ENCODE measurements at regions of chr5 and their contacts with region 1.

Region 1: GRCh38 chr5:31581498-31582099 is 49.5 kb downstream of the C5orf22 start:
- DNase-seq: no peak
- ATAC-seq: no peak
- H3K4me3 ChIP-seq: no peak overlapping the region
- H3K27ac ChIP-seq: no peak overlapping the region
- H3K4me1 ChIP-seq: no peaks in the 10 kb centered on the region
- H3K27me3 ChIP-seq: no peaks in the 10 kb centered on the region

Region 2: DNA sequence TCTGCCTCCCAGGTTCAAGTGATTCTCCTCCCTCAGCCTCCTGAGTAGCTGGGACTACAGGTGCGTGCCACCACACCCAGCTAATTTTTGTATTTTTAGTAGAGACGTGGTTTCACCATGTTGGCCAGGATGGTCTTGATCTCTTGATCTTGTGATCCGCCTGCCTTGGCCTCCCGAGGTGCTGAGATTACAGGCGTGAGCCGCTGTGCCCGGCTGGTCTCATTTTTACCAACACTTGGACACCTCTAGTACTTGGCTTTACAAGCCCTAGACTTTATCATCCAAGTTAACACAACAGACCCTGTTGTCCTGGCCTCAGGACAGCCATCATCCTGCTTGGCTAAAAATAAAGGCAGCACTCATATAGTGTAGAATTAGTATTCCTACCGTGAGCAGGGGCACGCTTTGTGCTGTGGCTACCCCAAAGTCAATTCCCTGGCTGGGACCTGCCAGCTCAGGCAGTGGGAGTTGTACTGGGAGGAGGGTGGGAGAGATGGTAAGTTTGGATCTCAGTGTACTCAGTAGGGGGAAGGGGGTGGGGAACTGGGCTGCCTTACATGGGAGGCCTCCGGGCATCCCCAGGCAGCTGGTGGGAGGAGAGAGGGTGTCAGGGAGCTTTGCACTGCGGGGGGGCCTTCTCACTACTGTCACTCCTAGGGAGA is 64.0 kb after region 1 on chr5:
- intact Hi-C with region 1: no loop called
- DNase-seq: peak in 2 of 3 donors; percentile 54 to 66
- ATAC-seq: peak; percentile 74 to 87
- H3K4me3 ChIP-seq: no peak overlapping the region
- H3K27ac ChIP-seq: peak overlapping the region; percentile 92
- H3K4me1 ChIP-seq: peaks cover 6% of the 10 kb centered on the region
- H3K27me3 ChIP-seq: no peaks in the 10 kb centered on the region

Region 3: DNA sequence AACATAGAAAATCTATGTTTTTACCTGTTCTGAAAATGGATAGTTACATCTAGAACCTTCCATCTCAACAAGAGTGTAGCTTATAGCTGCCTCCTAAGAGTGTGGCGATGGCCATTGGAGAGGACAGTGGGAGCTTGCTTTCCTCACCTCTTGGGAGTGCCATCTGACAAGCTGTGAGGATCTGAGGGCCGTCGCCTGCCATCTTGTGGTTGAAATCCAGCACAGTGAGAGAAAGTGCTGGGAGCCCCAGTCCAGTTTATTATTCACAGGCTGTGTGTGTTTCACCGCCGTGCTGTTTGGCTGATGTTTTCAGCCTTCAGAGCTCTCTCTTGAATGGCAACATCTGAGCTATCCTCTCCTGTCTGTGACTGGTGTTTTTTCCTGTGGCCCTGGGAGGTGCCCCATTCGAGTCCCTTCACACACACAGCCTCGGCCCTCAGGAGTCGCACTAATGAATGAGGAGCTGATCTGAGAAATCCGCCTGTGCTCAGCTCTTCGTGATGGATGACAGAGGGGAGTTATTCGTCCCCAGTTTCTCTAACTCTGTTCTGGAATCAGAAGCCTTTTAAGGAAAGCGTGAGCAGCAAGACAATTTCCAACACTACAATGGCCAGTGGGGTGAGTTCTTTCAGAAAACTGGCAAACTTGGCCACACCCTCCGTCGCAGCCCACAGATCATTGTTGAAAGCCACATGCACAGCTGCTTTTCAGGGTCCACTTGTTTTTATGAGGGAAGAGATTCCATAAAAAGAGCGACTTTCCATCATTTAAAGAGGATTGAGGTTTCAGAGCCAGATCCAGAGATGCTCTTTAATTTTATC is 227.7 kb after region 1 on chr5:
- intact Hi-C with region 1: loop called (anchors 2 to 5 kb)
- DNase-seq: peak; percentile 71 to 81 (median 80)
- ATAC-seq: peak; percentile 91 to 93
- H3K4me3 ChIP-seq: no peak overlapping the region
- H3K27ac ChIP-seq: no peak overlapping the region
- H3K4me1 ChIP-seq: no peaks in the 10 kb centered on the region
- H3K27me3 ChIP-seq: no peaks in the 10 kb centered on the region

Region 4: DNA sequence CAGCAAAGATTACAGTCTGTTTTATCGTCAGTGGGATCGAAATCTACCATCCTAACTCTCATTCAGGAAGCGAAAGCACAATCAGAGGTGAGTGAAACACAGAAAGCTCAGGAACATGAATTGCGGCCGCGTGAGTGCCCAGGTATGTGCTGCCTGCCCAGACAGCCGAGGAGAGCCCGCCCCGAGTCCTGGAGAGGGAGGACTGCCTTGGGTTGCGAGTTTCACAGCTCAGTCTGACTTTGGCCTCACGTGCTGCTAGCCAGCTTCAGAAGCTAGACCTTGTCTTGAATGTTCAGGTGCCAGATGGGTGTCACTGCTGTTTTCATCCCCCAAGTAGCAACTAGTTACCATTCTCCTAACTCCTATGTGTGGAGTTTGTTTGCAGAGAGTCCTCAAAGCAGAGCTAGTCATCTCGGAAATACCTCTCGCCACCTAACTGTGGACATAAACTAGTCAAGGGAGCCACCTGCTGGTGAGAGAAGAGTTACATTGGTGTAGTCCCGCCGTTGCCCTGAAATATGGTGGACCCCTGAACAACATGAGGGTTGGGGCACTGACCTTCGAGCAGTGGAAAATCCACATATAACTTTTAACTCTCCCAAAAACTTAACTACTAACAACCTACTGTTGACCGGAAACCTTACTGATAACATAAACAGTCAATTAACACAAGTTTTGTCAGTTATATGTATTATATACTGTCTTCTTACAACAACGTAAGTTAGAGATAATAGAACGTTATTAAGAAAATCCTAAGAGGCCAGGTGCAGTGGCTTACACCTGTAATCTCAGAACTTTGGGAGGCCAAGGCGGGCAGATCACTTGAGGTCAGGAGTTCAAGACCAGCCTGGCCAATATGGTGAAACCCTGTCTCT is 511.6 kb after region 1 on chr5:
- intact Hi-C with region 1: loop called in 3 of 4 experiments (anchors 5 to 10 kb)
- DNase-seq: peak in 2 of 3 donors; percentile 53 to 63
- ATAC-seq: peak; percentile 76 to 77
- H3K4me3 ChIP-seq: no peak overlapping the region
- H3K27ac ChIP-seq: no peak overlapping the region
- H3K4me1 ChIP-seq: peaks cover 8% of the 10 kb centered on the region
- H3K27me3 ChIP-seq: no peaks in the 10 kb centered on the region